GM12878 (cell line): ENCODE measurements at regions of chr2 and their contacts with region 1.

Region 1: GRCh38 chr2:11583840-11584524 is 50.1 kb downstream of the GREB1 start:
- DNase-seq: peak; percentile 46
- ATAC-seq: peak; percentile 91
- H3K4me3 ChIP-seq: no peak overlapping the region
- H3K27ac ChIP-seq: no peak overlapping the region
- H3K4me1 ChIP-seq: no peaks in the 10 kb centered on the region
- H3K27me3 ChIP-seq: peaks cover 0 to 2% of the 10 kb centered on the region in 2 experiments; a peak in 1 of 4 replicates
- CTCF ChIP-seq: peak; percentile 90 to 98 (median 92)
- EP300 ChIP-seq: no peak
- POLR2A ChIP-seq: no peak
- RAD21 ChIP-seq: peak; percentile 90

Region 2: DNA sequence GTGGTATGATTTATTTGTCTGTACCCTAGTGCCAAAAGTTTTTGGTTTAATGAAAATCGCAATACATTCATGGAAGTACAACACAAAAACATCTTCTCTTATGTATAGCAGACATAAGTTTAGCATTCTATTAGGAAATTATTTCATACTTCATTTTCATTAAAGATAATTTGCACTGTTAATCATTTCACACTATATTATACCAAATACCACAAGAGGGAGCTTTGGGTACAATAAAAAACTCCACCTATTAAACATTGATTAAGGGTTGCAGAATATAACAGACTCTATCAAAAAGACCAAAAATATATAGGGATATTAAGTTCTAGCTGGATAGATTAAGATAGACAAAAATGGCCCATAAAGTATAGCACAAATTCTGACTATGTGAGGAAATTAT is 349.7 kb before region 1 on chr2:
- CTCF ChIA-PET with region 1: interaction called, 16 read pairs
- POLR2A ChIA-PET with region 1: no interaction called
- RAD21 ChIA-PET with region 1: no interaction called
- SMC1A ChIA-PET with region 1: interaction called, 8 read pairs
- in situ Hi-C with region 1: no loop called
- intact Hi-C with region 1: loop called (anchors 5 kb)
- DNase-seq: no peak
- ATAC-seq: peak; percentile 47; the same call in 2 of the 3 replicates
- H3K4me3 ChIP-seq: no peak overlapping the region
- H3K27ac ChIP-seq: no peak overlapping the region
- H3K4me1 ChIP-seq: no peaks in the 10 kb centered on the region
- H3K27me3 ChIP-seq: no peaks in the 10 kb centered on the region
- CTCF ChIP-seq: peak in 1 of 3 experiments; percentile 26; a peak in 2 of 6 replicates
- EP300 ChIP-seq: no peak
- POLR2A ChIP-seq: no peak
- RAD21 ChIP-seq: peak; percentile 56; the same call in 1 of the 2 replicates

Region 3: GRCh38 chr2:11457935-11458334 is 126.0 kb before region 1 on chr2:
- CTCF ChIA-PET with region 1: interaction called, 14 read pairs
- POLR2A ChIA-PET with region 1: no interaction called
- RAD21 ChIA-PET with region 1: no interaction called
- SMC1A ChIA-PET with region 1: interaction called, 3 read pairs
- in situ Hi-C with region 1: no loop called
- intact Hi-C with region 1: no loop called
- DNase-seq: no peak
- ATAC-seq: peak; percentile 48
- H3K4me3 ChIP-seq: no peak overlapping the region
- H3K27ac ChIP-seq: peak overlapping the region; percentile 13
- H3K4me1 ChIP-seq: peaks cover 4% of the 10 kb centered on the region
- H3K27me3 ChIP-seq: no peaks in the 10 kb centered on the region
- CTCF ChIP-seq: no peak
- EP300 ChIP-seq: no peak
- POLR2A ChIP-seq: no peak
- RAD21 ChIP-seq: no peak

Region 4: DNA sequence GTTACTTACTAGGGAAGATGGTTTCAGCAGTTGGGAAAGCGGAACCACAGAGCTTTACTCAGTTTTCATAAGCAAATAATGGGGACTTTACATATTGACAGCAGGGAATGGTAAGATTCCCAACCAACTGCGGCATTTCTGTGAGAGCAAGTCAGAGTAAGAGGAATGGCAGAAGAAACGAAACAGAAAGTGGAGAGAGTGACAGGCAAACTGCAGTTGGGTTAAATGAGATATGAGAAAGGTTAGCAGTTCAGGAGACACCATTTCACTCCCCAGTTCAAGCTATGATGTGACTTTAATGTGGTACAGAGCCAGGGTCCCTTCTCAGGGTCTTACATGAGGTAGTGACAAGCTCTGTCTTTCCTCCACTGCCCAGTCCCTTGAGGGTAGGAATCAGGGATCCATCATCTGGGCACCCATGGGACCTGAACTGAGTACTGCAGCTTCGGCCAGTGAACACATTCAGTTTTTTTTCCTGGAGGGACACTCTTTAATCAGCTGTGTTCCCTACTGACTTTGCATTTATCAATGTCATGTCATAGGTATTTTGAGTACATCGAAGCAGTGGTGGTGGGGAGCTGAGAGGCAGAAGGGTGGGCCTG is 83.2 kb before region 1 on chr2:
- CTCF ChIA-PET with region 1: interaction called, 10 read pairs
- POLR2A ChIA-PET with region 1: no interaction called
- RAD21 ChIA-PET with region 1: interaction called, 5 read pairs
- SMC1A ChIA-PET with region 1: interaction called, 3 read pairs
- in situ Hi-C with region 1: no loop called
- intact Hi-C with region 1: no loop called
- DNase-seq: peak; percentile 45
- ATAC-seq: peak; percentile 53
- H3K4me3 ChIP-seq: peak overlapping the region; percentile 28; the same call in 1 of the 2 replicates
- H3K27ac ChIP-seq: peak overlapping the region; percentile 47; the same call in 1 of the 2 replicates
- H3K4me1 ChIP-seq: peaks cover 34% of the 10 kb centered on the region
- H3K27me3 ChIP-seq: no peaks in the 10 kb centered on the region
- CTCF ChIP-seq: no peak
- EP300 ChIP-seq: no peak
- POLR2A ChIP-seq: no peak
- RAD21 ChIP-seq: no peak

Region 5: GRCh38 chr2:11602563-11603204 is 18.7 kb after region 1 on chr2:
- CTCF ChIA-PET with region 1: interaction called, 30 read pairs
- POLR2A ChIA-PET with region 1: no interaction called
- RAD21 ChIA-PET with region 1: no interaction called
- SMC1A ChIA-PET with region 1: no interaction called
- in situ Hi-C with region 1: no loop called
- intact Hi-C with region 1: no loop called
- DNase-seq: no peak
- ATAC-seq: no peak
- H3K4me3 ChIP-seq: no peak overlapping the region
- H3K27ac ChIP-seq: no peak overlapping the region
- H3K4me1 ChIP-seq: no peaks in the 10 kb centered on the region
- H3K27me3 ChIP-seq: no peaks in the 10 kb centered on the region
- CTCF ChIP-seq: no peak
- EP300 ChIP-seq: no peak
- POLR2A ChIP-seq: no peak
- RAD21 ChIP-seq: no peak